Dendritic cell treated with granulocyte-macrophage colony-stimulating factor and Interleukin-4, amounts not matched to agents 40 ng/mL and 50 ng/mL, for 4 days (primary cell): ENCODE measurements at regions of chr1 and their contacts with region 1.

Region 1: GRCh38 chr1:224113918-224114786 is at the start of gene FBXO28:
- H3K4me3 Mint-ChIP-seq: peak within 1 kb of the TSS; percentile 88
- H3K27ac Mint-ChIP-seq: peak within 1 kb of the TSS; percentile 93
- H3K4me1 Mint-ChIP-seq: peaks cover 7% of the 10 kb centered on the region
- H3K27me3 Mint-ChIP-seq: no peaks in the 10 kb centered on the region

Region 2: GRCh38 chr1:224160171-224160682 is 46.1 kb after region 1 on chr1:
- intact Hi-C with region 1: loop called (anchors 5 kb)
- H3K4me3 Mint-ChIP-seq: no peak overlapping the region
- H3K27ac Mint-ChIP-seq: no peak overlapping the region
- H3K4me1 Mint-ChIP-seq: no peaks in the 10 kb centered on the region
- H3K27me3 Mint-ChIP-seq: no peaks in the 10 kb centered on the region

Region 3: DNA sequence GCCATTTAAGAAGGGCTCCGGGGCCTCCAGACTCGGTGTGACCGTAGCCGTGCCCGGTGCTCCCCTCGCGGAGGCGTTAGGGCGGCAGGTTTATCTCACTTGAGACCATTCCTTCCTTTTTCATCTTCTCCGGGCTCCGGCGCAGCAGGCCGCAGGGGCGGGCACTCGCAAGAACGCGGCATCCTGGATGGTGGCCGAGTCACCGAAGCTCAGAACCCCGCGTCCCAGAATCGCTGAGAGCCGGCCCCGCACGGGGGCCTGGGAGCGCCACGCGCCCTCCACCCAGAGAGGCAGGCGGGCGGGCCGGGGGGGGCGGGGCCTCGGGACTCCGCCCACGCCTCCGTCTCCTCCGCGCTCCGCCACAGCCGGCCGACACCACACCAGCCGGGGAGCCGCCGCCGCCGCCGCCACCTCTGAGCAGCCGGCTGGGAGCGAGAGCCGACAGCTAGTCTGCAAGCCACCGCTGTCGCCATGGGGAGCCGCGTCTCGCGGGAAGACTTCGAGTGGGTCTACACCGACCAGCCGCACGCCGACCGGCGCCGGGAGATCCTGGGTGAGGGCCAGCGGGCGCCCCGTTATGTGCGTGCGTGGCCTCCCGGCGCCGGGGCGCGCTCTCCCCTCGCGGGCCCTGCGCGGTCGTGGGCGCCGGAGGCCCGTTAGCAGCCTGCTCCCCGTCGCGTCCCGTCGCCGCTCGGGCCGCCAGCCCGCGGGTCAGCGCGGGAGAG is 68.9 kb after region 1 on chr1 and contains the start of gene DEGS1:
- intact Hi-C with region 1: no loop called
- H3K4me3 Mint-ChIP-seq: peak within 1 kb of the TSS; percentile 95
- H3K27ac Mint-ChIP-seq: peak within 1 kb of the TSS; percentile 90
- H3K4me1 Mint-ChIP-seq: peaks cover 34% of the 10 kb centered on the region
- H3K27me3 Mint-ChIP-seq: no peaks in the 10 kb centered on the region

Region 4: GRCh38 chr1:224329842-224330753 is 215.9 kb after region 1 on chr1 and contains the start of gene NVL:
- intact Hi-C with region 1: loop called (anchors 1 kb)
- H3K4me3 Mint-ChIP-seq: peak within 1 kb of the TSS; percentile 91
- H3K27ac Mint-ChIP-seq: peak within 1 kb of the TSS; percentile 97
- H3K4me1 Mint-ChIP-seq: peaks cover 38% of the 10 kb centered on the region
- H3K27me3 Mint-ChIP-seq: no peaks in the 10 kb centered on the region

Region 5: GRCh38 chr1:224356685-224357625 is 242.8 kb after region 1 on chr1 and contains the start of gene CNIH4:
- intact Hi-C with region 1: loop called (anchors 1 kb)
- H3K4me3 Mint-ChIP-seq: peak within 1 kb of the TSS; percentile 80
- H3K27ac Mint-ChIP-seq: peak within 1 kb of the TSS; percentile 77
- H3K4me1 Mint-ChIP-seq: peaks cover 28% of the 10 kb centered on the region
- H3K27me3 Mint-ChIP-seq: no peaks in the 10 kb centered on the region

Region 6: DNA sequence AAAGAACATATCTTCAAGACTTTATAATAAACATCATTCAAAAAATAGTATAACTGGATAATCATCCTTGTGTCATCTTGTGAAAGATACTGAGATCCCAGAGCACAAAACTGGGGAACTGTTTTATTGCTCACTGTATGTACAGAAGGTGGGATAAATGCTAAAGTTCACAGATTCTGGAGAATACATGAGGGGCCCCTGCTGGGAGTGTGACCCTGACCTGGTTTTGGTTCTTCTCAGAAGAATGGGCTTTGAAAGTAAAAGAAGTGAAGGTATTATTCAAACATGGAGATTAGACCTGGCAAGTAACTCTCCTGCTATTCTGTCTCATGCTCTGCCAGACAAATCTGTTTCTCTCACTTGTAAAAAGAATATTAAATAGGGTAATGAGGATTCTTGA is 306.0 kb after region 1 on chr1:
- intact Hi-C with region 1: no loop called
- H3K4me3 Mint-ChIP-seq: no peak overlapping the region
- H3K27ac Mint-ChIP-seq: no peak overlapping the region
- H3K4me1 Mint-ChIP-seq: peaks cover 5% of the 10 kb centered on the region
- H3K27me3 Mint-ChIP-seq: no peaks in the 10 kb centered on the region